IMR-90 (cell line): ENCODE measurements at regions of chrX and their contacts with region 1.

Region 1: DNA sequence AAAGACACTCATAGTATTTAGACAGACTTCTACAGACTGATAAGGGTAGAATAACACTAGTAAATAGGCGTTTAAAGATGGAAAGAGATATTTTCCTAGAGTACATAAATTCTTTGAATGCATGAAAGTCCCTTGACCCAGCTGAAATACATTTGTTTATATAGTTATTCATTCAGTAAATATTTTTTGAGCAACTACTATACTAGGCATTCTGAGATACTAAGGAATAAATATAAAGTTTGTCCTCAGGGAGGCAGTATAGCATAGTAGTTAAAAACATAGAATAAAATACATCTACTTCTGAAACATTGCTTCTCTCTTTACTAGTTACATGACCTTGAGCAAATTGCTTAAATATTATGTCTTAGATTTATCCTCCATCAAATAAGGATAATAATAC is 27.4 kb downstream of the HMGN5 start:
- DNase-seq: peak; percentile 37
- ATAC-seq: peak; percentile 82
- H3K4me3 ChIP-seq: no peak overlapping the region
- H3K27ac ChIP-seq: no peak overlapping the region
- H3K4me1 ChIP-seq: no peaks in the 10 kb centered on the region
- H3K27me3 ChIP-seq: no peaks in the 10 kb centered on the region
- CTCF ChIP-seq: peak; percentile 48
- POLR2A ChIP-seq: no peak
- RAD21 ChIP-seq: peak; percentile 43

Region 2: DNA sequence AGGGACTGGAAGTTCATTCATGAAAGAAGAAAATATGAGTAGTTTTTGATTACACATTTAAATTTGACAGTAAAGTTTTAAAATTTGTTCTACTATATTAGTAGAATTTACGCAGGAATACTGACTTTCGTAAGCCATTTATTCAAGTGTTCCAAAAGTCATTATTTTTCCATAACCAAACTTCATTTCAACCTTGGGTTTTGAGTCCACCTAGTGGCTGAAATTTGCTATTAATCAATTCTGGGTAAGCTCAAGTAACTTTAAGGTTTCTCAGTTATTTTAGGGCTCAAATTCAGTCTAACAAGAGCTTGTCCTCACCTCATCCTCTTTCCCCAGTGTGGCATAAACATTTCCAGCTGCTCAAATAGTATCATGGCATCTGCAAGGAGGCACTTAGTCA is 203.0 kb after region 1 on chrX:
- CTCF ChIA-PET with region 1: no interaction called
- POLR2A ChIA-PET with region 1: no interaction called
- dilution Hi-C with region 1: no loop called
- in situ Hi-C with region 1: loop called (anchors 10 kb)
- intact Hi-C with region 1: loop called (anchors 1 kb)
- DNase-seq: peak; percentile 27
- ATAC-seq: no peak
- H3K4me3 ChIP-seq: no peak overlapping the region
- H3K27ac ChIP-seq: no peak overlapping the region
- H3K4me1 ChIP-seq: no peaks in the 10 kb centered on the region
- H3K27me3 ChIP-seq: no peaks in the 10 kb centered on the region
- CTCF ChIP-seq: peak; percentile 62
- POLR2A ChIP-seq: no peak
- RAD21 ChIP-seq: peak; percentile 61

Region 3: GRCh38 chrX:81414630-81415029 is 240.3 kb after region 1 on chrX:
- CTCF ChIA-PET with region 1: interaction called, 4 read pairs
- POLR2A ChIA-PET with region 1: no interaction called
- dilution Hi-C with region 1: no loop called
- in situ Hi-C with region 1: no loop called
- intact Hi-C with region 1: loop called (anchors 1 kb)
- DNase-seq: no peak
- ATAC-seq: no peak
- H3K4me3 ChIP-seq: no peak overlapping the region
- H3K27ac ChIP-seq: no peak overlapping the region
- H3K4me1 ChIP-seq: no peaks in the 10 kb centered on the region
- H3K27me3 ChIP-seq: no peaks in the 10 kb centered on the region
- CTCF ChIP-seq: peak; percentile 31; the same call in 1 of the 2 replicates
- POLR2A ChIP-seq: no peak
- RAD21 ChIP-seq: peak; percentile 32; the same call in 1 of the 2 replicates

Region 4: GRCh38 chrX:81537723-81538122 is 363.4 kb after region 1 on chrX:
- CTCF ChIA-PET with region 1: no interaction called
- POLR2A ChIA-PET with region 1: no interaction called
- dilution Hi-C with region 1: no loop called
- in situ Hi-C with region 1: no loop called
- intact Hi-C with region 1: no loop called
- DNase-seq: no peak
- ATAC-seq: no peak
- H3K4me3 ChIP-seq: no peak overlapping the region
- H3K27ac ChIP-seq: no peak overlapping the region
- H3K4me1 ChIP-seq: no peaks in the 10 kb centered on the region
- H3K27me3 ChIP-seq: no peaks in the 10 kb centered on the region; the same call in 1 of the 2 replicates
- CTCF ChIP-seq: no peak
- POLR2A ChIP-seq: no peak
- RAD21 ChIP-seq: no peak